Calu3 (cell line): ENCODE measurements at regions of chr16 and their contacts with region 1.

Region 1: DNA sequence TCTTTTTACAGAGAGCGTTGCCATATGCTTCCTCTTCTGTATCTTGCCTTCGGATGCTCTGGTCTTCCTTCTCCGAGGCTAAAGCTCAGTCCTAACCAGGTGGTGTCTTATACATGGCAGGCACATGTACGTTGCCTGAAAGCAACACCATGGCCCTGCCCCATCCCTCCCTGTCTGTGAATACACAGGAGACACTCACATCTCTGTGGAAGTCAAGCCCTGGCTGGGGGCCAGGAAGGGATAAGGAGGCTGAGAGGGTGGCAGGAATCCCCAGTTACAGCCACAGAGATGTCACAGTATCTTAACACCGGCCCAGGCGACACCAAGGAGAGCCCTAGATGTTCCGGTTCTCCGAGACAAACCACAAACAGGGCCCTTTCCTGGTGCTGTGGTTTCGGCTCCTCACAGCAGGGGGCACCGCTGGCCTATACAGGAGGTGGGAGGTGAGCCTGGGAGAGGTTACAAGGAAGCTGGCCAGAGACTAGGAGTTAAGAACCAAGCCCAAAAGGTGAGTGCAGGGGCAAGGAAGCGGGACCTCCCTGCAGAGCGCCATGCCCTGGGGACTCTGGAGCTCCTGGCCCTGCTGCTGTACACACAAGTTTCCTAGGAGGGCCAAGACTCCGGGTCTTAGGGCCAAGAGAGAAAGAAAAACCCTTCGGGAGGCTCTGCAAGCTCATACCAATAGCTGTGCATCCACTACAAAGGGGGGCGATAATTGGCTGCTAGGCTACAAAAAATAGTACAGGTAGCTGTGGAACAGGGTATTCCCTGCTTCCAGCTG is 41.7 kb downstream of the SRL start:
- DNase-seq: peak; percentile 90
- H3K4me3 Mint-ChIP-seq: peak overlapping the region; percentile 30
- H3K27ac Mint-ChIP-seq: peak overlapping the region; percentile 69
- H3K4me1 Mint-ChIP-seq: peaks cover 12% of the 10 kb centered on the region
- H3K27me3 Mint-ChIP-seq: no peaks in the 10 kb centered on the region
- CTCF ChIP-seq: peak; percentile 85

Region 2: GRCh38 chr16:3880623-3881498 is 319.3 kb before region 1 on chr16 and contains the start of gene CREBBP:
- CTCF ChIA-PET with region 1: no interaction called
- intact Hi-C with region 1: no loop called
- DNase-seq: peak; percentile 93
- H3K4me3 Mint-ChIP-seq: peak within 1 kb of the TSS; percentile 88
- H3K27ac Mint-ChIP-seq: peak within 1 kb of the TSS; percentile 59
- H3K4me1 Mint-ChIP-seq: peaks cover 36% of the 10 kb centered on the region
- H3K27me3 Mint-ChIP-seq: no peaks in the 10 kb centered on the region
- CTCF ChIP-seq: no peak
- total RNA-seq, gene CREBBP: 91.0 and 92.0 TPM in 2 replicates

Region 3: GRCh38 chr16:3983081-3983520 is 217.1 kb before region 1 on chr16:
- CTCF ChIA-PET with region 1: interaction called, 26 read pairs
- intact Hi-C with region 1: loop called (anchors 5 kb)
- DNase-seq: peak; percentile 92
- H3K4me3 Mint-ChIP-seq: peak overlapping the region; percentile 46
- H3K27ac Mint-ChIP-seq: no peak overlapping the region
- H3K4me1 Mint-ChIP-seq: peaks cover 18% of the 10 kb centered on the region
- H3K27me3 Mint-ChIP-seq: no peaks in the 10 kb centered on the region
- CTCF ChIP-seq: peak; percentile 86

Region 4: GRCh38 chr16:4152266-4152665 is 47.9 kb before region 1 on chr16:
- CTCF ChIA-PET with region 1: no interaction called
- intact Hi-C with region 1: no loop called
- DNase-seq: no peak
- H3K4me3 Mint-ChIP-seq: no peak overlapping the region
- H3K27ac Mint-ChIP-seq: no peak overlapping the region
- H3K4me1 Mint-ChIP-seq: no peaks in the 10 kb centered on the region
- H3K27me3 Mint-ChIP-seq: peaks cover under 1% of the 10 kb centered on the region
- CTCF ChIP-seq: no peak

Region 5: DNA sequence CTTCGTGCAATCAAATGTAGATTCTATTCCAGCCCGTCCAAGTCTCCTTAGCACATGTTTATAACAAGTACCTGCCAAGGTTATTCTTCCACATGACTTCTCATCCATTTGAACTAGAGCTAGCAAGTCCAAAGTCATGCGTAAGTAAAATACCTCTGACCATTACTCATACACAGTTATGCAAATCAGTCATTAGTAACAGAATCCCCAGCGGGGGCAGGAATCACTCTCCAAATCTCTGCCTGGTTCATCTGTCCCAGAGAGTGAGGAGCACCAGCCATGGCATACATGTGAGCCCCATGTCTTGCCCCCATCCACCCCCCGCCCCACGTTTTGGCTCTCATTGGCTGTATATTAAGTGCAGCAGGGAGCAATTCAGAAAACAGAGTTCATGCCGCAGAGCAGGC is 14.0 kb after region 1 on chr16:
- CTCF ChIA-PET with region 1: interaction called, 22 read pairs
- intact Hi-C with region 1: no loop called
- DNase-seq: peak; percentile 70
- H3K4me3 Mint-ChIP-seq: no peak overlapping the region
- H3K27ac Mint-ChIP-seq: peak overlapping the region; percentile 95
- H3K4me1 Mint-ChIP-seq: peaks cover 20% of the 10 kb centered on the region
- H3K27me3 Mint-ChIP-seq: no peaks in the 10 kb centered on the region
- CTCF ChIP-seq: no peak